ENCODE measurements at regions of chr10 and their contacts with region 1.

Region 1: GRCh38 chr10:103192451-103193106 is 493 bp downstream of the NT5C2 start:
- DNase-seq: peak; percentile 90
- H3K4me3 ChIP-seq: peak overlapping the region; percentile 61 to 95 (median 71)
- H3K27ac ChIP-seq: peak overlapping the region; percentile 80
- H3K4me1 ChIP-seq: peaks cover 35% of the 10 kb centered on the region
- H3K27me3 ChIP-seq: no peaks in the 10 kb centered on the region
- CTCF ChIP-seq: no peak
- POLR2A ChIP-seq: peak; percentile 48

Region 2: DNA sequence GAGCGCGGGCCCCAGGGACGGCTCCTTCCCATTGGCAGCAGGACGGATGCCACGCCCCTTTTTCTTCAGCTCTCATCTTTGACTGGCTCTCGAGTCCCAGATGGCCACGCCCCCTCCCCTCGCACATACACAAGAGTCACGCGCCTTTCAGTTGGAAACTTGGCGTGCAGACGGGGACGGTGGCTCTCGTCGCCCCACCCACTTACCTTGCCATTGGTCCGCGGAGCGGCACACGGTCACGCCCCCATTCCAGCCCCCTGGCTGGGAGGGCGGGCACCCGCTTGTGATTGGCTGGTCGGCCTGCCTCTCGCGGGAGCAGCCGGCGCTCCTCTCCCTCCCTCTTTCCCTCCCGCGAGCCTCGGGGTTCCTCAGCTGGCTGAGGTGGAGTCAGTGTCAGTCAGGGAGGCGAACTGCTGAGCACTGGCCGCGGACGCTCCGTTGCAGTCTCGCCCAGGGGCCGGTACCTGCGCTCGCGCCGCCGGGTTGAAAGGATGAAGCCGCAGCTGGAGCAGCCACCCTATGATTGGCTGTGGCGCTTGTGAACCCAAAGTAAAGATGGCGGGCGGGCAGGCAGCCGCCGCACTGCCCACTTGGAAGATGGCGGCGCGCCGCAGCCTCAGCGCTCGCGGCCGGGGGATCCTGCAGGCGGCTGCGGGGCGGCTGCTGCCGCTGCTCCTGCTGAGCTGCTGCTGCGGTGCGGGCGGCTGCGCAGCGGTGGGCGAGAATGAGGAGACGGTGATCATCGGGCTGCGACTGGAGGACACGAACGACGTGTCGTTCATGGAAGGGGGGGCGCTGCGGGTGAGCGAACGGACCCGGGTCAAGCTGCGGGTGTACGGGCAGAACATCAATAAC is 274.4 kb before region 1 on chr10 and contains the start of gene CNNM2:
- CTCF ChIA-PET with region 1: interaction called, 11 read pairs
- POLR2A ChIA-PET with region 1: interaction called, 4 read pairs
- dilution Hi-C with region 1: no loop called
- intact Hi-C with region 1: loop called (anchors 2 kb)
- DNase-seq: peak; percentile 100
- H3K4me3 ChIP-seq: peak within 1 kb of the TSS; percentile 43 to 76 (median 47)
- H3K27ac ChIP-seq: peak within 1 kb of the TSS; percentile 57
- H3K4me1 ChIP-seq: peaks cover 10% of the 10 kb centered on the region
- H3K27me3 ChIP-seq: peaks cover 13 to 15% of the 10 kb centered on the region in 2 experiments
- CTCF ChIP-seq: no peak
- POLR2A ChIP-seq: peak; percentile 59
- total RNA-seq, gene CNNM2: 3.0 and 3.2 TPM in 2 replicates

Region 3: DNA sequence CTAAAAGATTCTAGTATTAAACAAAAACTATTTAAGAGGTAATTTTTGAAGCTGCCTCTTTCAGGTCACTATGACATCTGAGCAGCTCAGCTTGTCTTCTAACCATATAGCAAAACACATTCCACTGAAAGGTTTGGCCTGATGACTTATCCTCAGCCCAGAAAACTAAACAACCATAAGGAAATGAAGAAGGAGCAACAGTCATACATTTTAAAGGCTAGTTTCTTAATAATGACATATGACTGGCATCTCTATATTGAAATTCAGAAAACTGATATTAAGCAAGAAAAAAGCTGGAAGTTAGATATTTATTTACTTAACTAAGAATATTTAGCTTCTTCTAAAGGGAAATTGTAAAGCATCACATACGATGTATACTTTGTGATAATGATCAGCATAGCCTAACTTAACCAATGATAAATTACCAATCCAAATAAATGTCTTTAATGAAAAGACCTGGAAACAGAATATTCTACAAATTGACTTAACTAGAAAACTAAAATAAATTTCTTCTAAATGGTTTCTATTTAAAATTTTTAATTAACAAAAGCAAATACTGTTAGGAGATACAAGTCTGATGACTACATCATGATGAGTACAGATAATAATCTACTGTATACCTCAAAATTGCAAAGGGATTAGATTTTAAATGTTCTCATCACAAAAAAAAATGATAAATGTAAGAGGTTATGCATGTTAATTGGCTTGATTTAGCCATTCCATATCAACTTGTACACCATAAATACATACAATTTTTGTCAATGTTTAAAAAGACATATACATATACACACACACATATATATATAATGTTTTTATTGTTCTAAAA is 23.9 kb before region 1 on chr10:
- CTCF ChIA-PET with region 1: interaction called, 4 read pairs
- POLR2A ChIA-PET with region 1: interaction called, 6 read pairs
- dilution Hi-C with region 1: no loop called
- intact Hi-C with region 1: loop called (anchors 2 kb)
- DNase-seq: peak; percentile 36
- H3K4me3 ChIP-seq: no peak overlapping the region
- H3K27ac ChIP-seq: no peak overlapping the region
- H3K4me1 ChIP-seq: peaks cover 34% of the 10 kb centered on the region
- H3K27me3 ChIP-seq: no peaks in the 10 kb centered on the region
- CTCF ChIP-seq: no peak
- POLR2A ChIP-seq: no peak

Region 4: DNA sequence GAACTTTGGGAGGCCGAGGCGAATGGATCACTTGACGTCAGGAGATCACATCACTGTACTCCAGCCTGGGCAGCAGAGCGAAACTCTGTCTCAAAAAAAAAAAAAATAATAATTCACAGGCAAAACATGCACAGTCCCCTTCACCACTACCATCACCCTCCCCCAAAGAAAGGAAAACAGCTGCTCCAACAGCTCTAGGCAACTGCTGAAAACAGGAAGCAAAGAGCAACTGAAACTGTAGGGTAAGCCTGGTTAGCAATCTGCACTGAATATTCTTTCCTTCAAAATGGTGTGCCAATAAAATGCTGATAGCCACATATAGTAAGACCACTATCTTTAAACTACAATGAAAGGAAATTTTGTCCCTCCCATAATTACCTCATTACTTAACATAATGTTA is 11.3 kb before region 1 on chr10:
- CTCF ChIA-PET with region 1: interaction called, 4 read pairs
- POLR2A ChIA-PET with region 1: interaction called, 20 read pairs
- dilution Hi-C with region 1: no loop called
- intact Hi-C with region 1: loop called (anchors 1 kb)
- DNase-seq: peak; percentile 91
- H3K4me3 ChIP-seq: no peak overlapping the region
- H3K27ac ChIP-seq: peak overlapping the region; percentile 51
- H3K4me1 ChIP-seq: peaks cover 25% of the 10 kb centered on the region
- H3K27me3 ChIP-seq: no peaks in the 10 kb centered on the region
- CTCF ChIP-seq: no peak
- POLR2A ChIP-seq: no peak

Region 5: DNA sequence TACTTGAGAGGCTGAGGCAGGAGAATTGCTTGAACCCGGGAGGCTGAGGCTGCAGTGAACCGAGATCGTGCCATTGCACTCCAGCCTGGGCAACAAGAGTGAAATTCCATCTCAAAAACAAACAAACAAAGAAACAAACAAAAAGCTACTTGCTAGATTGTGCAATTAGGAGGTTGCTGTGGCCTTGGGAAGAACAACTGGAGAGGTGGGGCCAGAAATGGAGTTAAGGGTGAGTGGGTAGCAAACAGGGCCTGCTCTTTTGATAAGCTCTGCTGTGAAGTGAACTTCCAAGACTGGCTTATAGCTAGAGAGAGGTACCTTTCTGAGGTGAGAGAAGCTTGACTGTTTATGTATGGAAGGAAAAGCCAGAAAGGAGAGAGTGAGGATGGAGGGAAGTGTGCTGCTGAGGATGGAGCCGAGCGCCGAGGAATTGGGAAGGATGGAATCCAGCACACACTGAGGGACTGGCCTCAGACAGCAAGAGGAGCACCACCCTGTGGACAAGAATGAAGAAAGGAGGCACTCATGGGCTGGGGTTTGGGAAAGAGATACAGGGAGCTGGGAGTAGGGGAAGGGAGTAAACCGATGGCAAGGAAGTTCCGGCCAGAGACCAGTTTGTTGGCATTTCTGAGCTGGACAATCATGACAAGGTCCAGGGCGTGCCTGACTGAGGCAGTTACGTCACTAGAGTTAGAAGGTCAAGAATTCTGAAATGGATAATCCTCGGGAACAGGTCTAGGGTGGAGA is 46.1 kb after region 1 on chr10:
- CTCF ChIA-PET with region 1: interaction called, 89 read pairs
- POLR2A ChIA-PET with region 1: interaction called, 13 read pairs
- dilution Hi-C with region 1: no loop called
- intact Hi-C with region 1: loop called (anchors 2 kb)
- DNase-seq: peak; percentile 52
- H3K4me3 ChIP-seq: no peak overlapping the region
- H3K27ac ChIP-seq: no peak overlapping the region
- H3K4me1 ChIP-seq: peaks cover 13% of the 10 kb centered on the region
- H3K27me3 ChIP-seq: no peaks in the 10 kb centered on the region
- CTCF ChIP-seq: peak; percentile 25 to 50
- POLR2A ChIP-seq: no peak

Measured in endothelial cell of umbilical vein (primary cell).